B cell (primary cell): ENCODE measurements at regions of chr9 and their contacts with region 1.

Region 1: DNA sequence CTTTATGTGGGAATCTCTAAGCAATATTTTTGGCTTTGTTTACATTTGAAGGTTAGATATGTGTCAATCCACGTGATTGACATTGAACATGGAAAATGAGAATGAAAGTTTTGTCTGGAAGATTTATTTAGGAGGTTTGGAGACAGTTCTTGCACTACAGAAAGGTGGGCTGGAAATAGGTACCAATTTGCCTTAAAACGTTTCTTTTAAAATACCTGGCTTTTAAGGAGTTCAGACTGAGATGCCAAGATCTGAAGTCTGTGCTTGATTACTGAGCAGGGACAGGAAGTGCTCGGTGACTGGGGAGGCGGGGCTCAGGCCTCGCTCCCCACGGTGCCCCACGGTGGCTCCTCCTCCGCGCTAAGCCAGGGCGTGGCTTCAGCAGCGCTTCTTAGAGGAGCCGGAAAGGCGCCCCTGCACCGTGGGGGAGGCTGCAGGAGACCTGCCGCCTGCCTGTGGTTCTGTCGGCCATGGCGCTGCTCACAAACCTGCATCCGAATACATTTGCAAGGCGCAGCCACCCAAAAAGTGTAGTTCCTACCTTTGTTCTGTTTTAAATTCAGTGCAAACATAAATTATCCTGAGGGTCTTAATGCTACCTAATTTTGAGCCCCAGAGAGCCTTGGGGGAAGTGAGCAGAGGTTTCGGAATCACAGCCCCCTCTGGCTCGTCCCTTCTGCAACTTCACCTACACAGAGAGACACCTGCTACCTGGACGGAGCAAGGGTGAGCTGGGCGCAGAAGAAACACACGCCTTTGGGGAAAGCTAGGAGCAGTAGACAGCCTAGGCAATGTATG is 49.2 kb downstream of the USP20 start:
- DNase-seq: peak; percentile 95
- ATAC-seq: peak; percentile 57
- H3K4me3 ChIP-seq: peak overlapping the region; percentile 39 to 81 (median 65)
- H3K4me3 Mint-ChIP-seq: peak overlapping the region; percentile 95
- H3K27ac ChIP-seq: peak overlapping the region; percentile 75 to 90
- H3K27ac Mint-ChIP-seq: peak overlapping the region; percentile 97
- H3K4me1 ChIP-seq: peaks cover 48 to 58% of the 10 kb centered on the region in 2 donors
- H3K4me1 Mint-ChIP-seq: peaks cover 58% of the 10 kb centered on the region
- H3K27me3 ChIP-seq: no peaks in the 10 kb centered on the region
- H3K27me3 Mint-ChIP-seq: no peaks in the 10 kb centered on the region
- CTCF ChIP-seq: peak; percentile 29

Region 2: GRCh38 chr9:129835021-129835871 is 49.2 kb before region 1 on chr9 and contains the starts of genes C9orf78 and USP20:
- CTCF ChIA-PET with region 1: interaction called, 4 read pairs
- POLR2A ChIA-PET with region 1: interaction called, 9 read pairs
- intact Hi-C with region 1: loop called (anchors 1 kb)
- DNase-seq: peak; percentile 99
- ATAC-seq: peak; percentile 95
- H3K4me3 ChIP-seq: peak within 1 kb of the TSS; percentile 75 to 98 (median 85)
- H3K4me3 Mint-ChIP-seq: peak within 1 kb of the TSS; percentile 98
- H3K27ac ChIP-seq: peak within 1 kb of the TSS; percentile 85 to 92
- H3K27ac Mint-ChIP-seq: peak within 1 kb of the TSS; percentile 99
- H3K4me1 ChIP-seq: peaks cover 22 to 35% of the 10 kb centered on the region in 2 donors
- H3K4me1 Mint-ChIP-seq: peaks cover 51% of the 10 kb centered on the region
- H3K27me3 ChIP-seq: no peaks in the 10 kb centered on the region
- H3K27me3 Mint-ChIP-seq: no peaks in the 10 kb centered on the region
- CTCF ChIP-seq: no peak
- total RNA-seq, gene C9orf78: 42.8 and 43.6 TPM in 2 replicates
- total RNA-seq, gene USP20: 49.5 and 52.2 TPM in 2 replicates

Region 3: GRCh38 chr9:129907196-129907595 is 22.8 kb after region 1 on chr9:
- CTCF ChIA-PET with region 1: interaction called, 18 read pairs
- POLR2A ChIA-PET with region 1: interaction called, 6 read pairs
- intact Hi-C with region 1: no loop called
- DNase-seq: no peak
- ATAC-seq: no peak
- H3K4me3 ChIP-seq: no peak overlapping the region
- H3K4me3 Mint-ChIP-seq: no peak overlapping the region
- H3K27ac ChIP-seq: no peak overlapping the region
- H3K27ac Mint-ChIP-seq: peak overlapping the region; percentile 10
- H3K4me1 ChIP-seq: peaks cover 0 to 2% of the 10 kb centered on the region in 2 donors
- H3K4me1 Mint-ChIP-seq: peaks cover 8% of the 10 kb centered on the region
- H3K27me3 ChIP-seq: no peaks in the 10 kb centered on the region
- H3K27me3 Mint-ChIP-seq: no peaks in the 10 kb centered on the region
- CTCF ChIP-seq: no peak

Region 4: GRCh38 chr9:129962889-129963703 is 78.7 kb after region 1 on chr9:
- CTCF ChIA-PET with region 1: interaction called, 28 read pairs
- POLR2A ChIA-PET with region 1: no interaction called
- intact Hi-C with region 1: loop called (anchors 1 kb)
- DNase-seq: peak; percentile 88
- ATAC-seq: peak; percentile 96
- H3K4me3 ChIP-seq: peak overlapping the region; percentile 43 to 81 (median 58)
- H3K4me3 Mint-ChIP-seq: peak overlapping the region; percentile 83
- H3K27ac ChIP-seq: peak overlapping the region; percentile 93 to 96
- H3K27ac Mint-ChIP-seq: peak overlapping the region; percentile 93
- H3K4me1 ChIP-seq: peaks cover 30 to 35% of the 10 kb centered on the region in 2 donors
- H3K4me1 Mint-ChIP-seq: peaks cover 61% of the 10 kb centered on the region
- H3K27me3 ChIP-seq: no peaks in the 10 kb centered on the region
- H3K27me3 Mint-ChIP-seq: no peaks in the 10 kb centered on the region
- CTCF ChIP-seq: no peak

Region 5: GRCh38 chr9:130010151-130010988 is 126.0 kb after region 1 on chr9:
- CTCF ChIA-PET with region 1: interaction called, 3 read pairs
- POLR2A ChIA-PET with region 1: interaction called, 5 read pairs
- intact Hi-C with region 1: loop called (anchors 1 kb)
- DNase-seq: peak; percentile 91
- ATAC-seq: peak; percentile 65
- H3K4me3 ChIP-seq: no peak overlapping the region
- H3K4me3 Mint-ChIP-seq: peak overlapping the region; percentile 61
- H3K27ac ChIP-seq: peak overlapping the region; percentile 96 to 98
- H3K27ac Mint-ChIP-seq: peak overlapping the region; percentile 93
- H3K4me1 ChIP-seq: peaks cover 67 to 70% of the 10 kb centered on the region in 2 donors
- H3K4me1 Mint-ChIP-seq: peaks cover 74% of the 10 kb centered on the region
- H3K27me3 ChIP-seq: no peaks in the 10 kb centered on the region
- H3K27me3 Mint-ChIP-seq: no peaks in the 10 kb centered on the region
- CTCF ChIP-seq: no peak

Region 6: GRCh38 chr9:130053504-130054324 is 169.3 kb after region 1 on chr9 and contains the start of gene GPR107:
- CTCF ChIA-PET with region 1: interaction called, 3 read pairs
- POLR2A ChIA-PET with region 1: interaction called, 5 read pairs
- intact Hi-C with region 1: loop called (anchors 1 kb)
- DNase-seq: peak; percentile 87
- ATAC-seq: peak; percentile 97
- H3K4me3 ChIP-seq: peak within 1 kb of the TSS; percentile 78 to 96 (median 88)
- H3K4me3 Mint-ChIP-seq: peak within 1 kb of the TSS; percentile 91
- H3K27ac ChIP-seq: peak within 1 kb of the TSS; percentile 64 to 95
- H3K27ac Mint-ChIP-seq: peak within 1 kb of the TSS; percentile 88
- H3K4me1 ChIP-seq: peaks cover 14 to 20% of the 10 kb centered on the region in 2 donors
- H3K4me1 Mint-ChIP-seq: peaks cover 30% of the 10 kb centered on the region
- H3K27me3 ChIP-seq: no peaks in the 10 kb centered on the region
- H3K27me3 Mint-ChIP-seq: no peaks in the 10 kb centered on the region
- CTCF ChIP-seq: no peak
- total RNA-seq, gene GPR107: 26.8 and 28.1 TPM in 2 replicates

Region 7: DNA sequence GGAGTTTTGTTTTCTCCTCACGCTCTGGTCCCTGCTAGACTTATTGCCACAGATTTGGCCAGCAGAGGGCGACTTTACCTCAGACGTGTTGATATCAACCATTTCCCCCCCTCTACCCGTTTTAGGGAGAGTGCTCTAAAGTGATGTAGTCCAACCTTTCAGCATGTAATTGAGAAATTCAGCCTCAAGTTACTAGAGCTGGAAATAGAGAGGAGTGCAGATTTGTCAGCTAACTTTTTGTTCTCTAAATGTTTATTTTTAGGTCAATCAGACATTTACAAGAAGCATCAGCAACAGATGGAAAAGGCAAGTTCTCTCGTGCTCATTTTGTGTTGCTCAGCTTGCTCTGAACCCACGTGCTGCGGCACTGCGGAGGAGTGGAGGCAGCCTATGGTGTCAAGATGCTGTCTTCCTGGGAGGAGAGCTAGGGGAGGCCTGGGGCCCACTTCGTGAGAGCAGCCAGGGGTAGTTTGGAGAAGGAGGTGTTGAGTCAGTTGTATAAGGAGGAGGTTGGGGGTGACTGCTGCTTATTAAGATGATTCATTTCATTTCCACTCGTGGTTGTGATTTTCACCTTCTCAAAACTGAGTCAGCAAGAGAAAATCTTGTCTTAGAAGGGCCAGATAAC is 222.9 kb after region 1 on chr9:
- CTCF ChIA-PET with region 1: interaction called, 23 read pairs
- POLR2A ChIA-PET with region 1: no interaction called
- intact Hi-C with region 1: no loop called
- DNase-seq: peak; percentile 85
- ATAC-seq: peak; percentile 80
- H3K4me3 ChIP-seq: no peak overlapping the region
- H3K4me3 Mint-ChIP-seq: no peak overlapping the region
- H3K27ac ChIP-seq: no peak overlapping the region
- H3K27ac Mint-ChIP-seq: peak overlapping the region; percentile 42
- H3K4me1 ChIP-seq: no peaks in the 10 kb centered on the region
- H3K4me1 Mint-ChIP-seq: peaks cover 11% of the 10 kb centered on the region
- H3K27me3 ChIP-seq: no peaks in the 10 kb centered on the region
- H3K27me3 Mint-ChIP-seq: no peaks in the 10 kb centered on the region
- CTCF ChIP-seq: peak; percentile 89